Activated CD4-positive, alpha-beta memory T cell treated with anti-CD3 and anti-CD28 coated beads for 36 hours (primary cell): ENCODE measurements at regions of chr9 and their contacts with region 1.

Region 1: DNA sequence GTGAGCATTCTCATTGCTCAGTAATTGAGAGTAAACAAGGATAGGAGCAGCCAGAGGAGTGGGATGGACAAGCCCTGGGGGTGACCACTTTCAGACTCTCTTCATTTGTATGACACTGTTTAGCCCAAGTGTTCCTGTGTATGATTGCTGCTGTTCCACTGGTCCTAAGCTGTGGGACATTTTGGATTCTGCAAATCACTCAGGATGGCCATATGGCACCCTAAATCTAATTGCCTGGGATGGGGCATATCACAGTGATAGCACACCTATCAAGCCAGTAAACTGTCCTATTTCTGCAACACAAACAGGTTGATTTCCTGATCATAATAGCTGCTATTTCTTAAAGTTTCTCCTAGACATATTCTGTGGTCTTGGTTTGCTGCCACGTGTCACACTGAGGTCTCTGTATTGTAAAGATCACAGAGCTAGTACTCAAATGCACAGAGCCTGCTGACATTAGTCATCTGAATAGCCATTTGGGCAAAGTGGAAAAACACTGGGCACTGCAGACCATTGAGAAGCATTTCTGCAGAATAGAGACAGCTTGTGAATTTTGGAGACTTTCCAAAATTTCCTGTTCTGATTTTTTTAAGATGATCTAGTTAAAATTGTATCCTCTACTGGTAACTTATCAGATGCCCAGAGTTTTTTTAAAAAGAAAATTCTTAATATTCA is 320.2 kb downstream of the RFX3 start:
- DNase-seq: no peak
- H3K4me3 Mint-ChIP-seq: no peak overlapping the region
- H3K27ac Mint-ChIP-seq: no peak overlapping the region
- H3K4me1 Mint-ChIP-seq: no peaks in the 10 kb centered on the region
- H3K27me3 Mint-ChIP-seq: no peaks in the 10 kb centered on the region

Region 2: GRCh38 chr9:2872257-2872935 is 333.2 kb before region 1 on chr9:
- CTCF ChIA-PET with region 1: no interaction called
- POLR2A ChIA-PET with region 1: no interaction called
- intact Hi-C with region 1: loop called (anchors 10 kb)
- DNase-seq: no peak
- H3K4me3 Mint-ChIP-seq: no peak overlapping the region
- H3K27ac Mint-ChIP-seq: no peak overlapping the region
- H3K4me1 Mint-ChIP-seq: peaks cover 6% of the 10 kb centered on the region
- H3K27me3 Mint-ChIP-seq: peaks cover 19% of the 10 kb centered on the region

Region 3: DNA sequence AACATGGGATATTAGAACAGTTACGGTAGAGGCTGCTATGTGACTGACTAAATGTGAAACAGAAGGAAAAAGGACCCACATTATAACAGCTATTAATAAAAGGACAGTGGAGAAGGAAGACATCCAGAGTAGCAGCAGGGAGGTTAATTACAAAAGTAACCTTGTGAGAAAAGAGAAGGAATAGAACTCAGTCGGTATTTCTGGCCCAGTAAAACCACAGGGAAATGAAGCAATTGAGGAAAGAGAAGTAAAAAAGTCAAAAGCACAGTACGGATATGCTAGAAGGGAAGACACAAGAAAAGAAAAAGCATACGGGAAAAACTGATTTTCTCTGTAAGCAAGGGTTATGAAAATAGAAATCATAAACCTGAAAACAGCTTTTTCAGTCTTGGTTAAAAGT is 155.6 kb after region 1 on chr9:
- CTCF ChIA-PET with region 1: no interaction called
- POLR2A ChIA-PET with region 1: no interaction called
- intact Hi-C with region 1: no loop called
- DNase-seq: no peak
- H3K4me3 Mint-ChIP-seq: no peak overlapping the region
- H3K27ac Mint-ChIP-seq: no peak overlapping the region
- H3K4me1 Mint-ChIP-seq: peaks cover 2% of the 10 kb centered on the region
- H3K27me3 Mint-ChIP-seq: no peaks in the 10 kb centered on the region

Region 4: GRCh38 chr9:3467593-3468219 is 262.1 kb after region 1 on chr9:
- CTCF ChIA-PET with region 1: no interaction called
- POLR2A ChIA-PET with region 1: no interaction called
- intact Hi-C with region 1: no loop called
- DNase-seq: peak; percentile 70
- H3K4me3 Mint-ChIP-seq: no peak overlapping the region
- H3K27ac Mint-ChIP-seq: no peak overlapping the region
- H3K4me1 Mint-ChIP-seq: peaks cover 13% of the 10 kb centered on the region
- H3K27me3 Mint-ChIP-seq: no peaks in the 10 kb centered on the region